Activated CD4-positive, alpha-beta T cell treated with anti-CD3 and anti-CD28 coated beads, Interleukin-2, amount 10 ng/mL, durations not matched to agents 24 days and 14 days (primary cell): ENCODE measurements at regions of chr7 and their contacts with region 1.

Region 1: GRCh38 chr7:105149827-105150226 is 135.8 kb downstream of the KMT2E start:
- DNase-seq: no peak
- H3K4me3 Mint-ChIP-seq: no peak overlapping the region
- H3K27ac Mint-ChIP-seq: no peak overlapping the region
- H3K4me1 Mint-ChIP-seq: peaks cover 6% of the 10 kb centered on the region
- H3K27me3 Mint-ChIP-seq: no peaks in the 10 kb centered on the region

Region 2: GRCh38 chr7:105336009-105336408 is 186.2 kb after region 1 on chr7:
- intact Hi-C with region 1: loop called (anchors 5 kb)
- DNase-seq: no peak
- H3K4me3 Mint-ChIP-seq: no peak overlapping the region
- H3K27ac Mint-ChIP-seq: no peak overlapping the region
- H3K4me1 Mint-ChIP-seq: peaks cover 5% of the 10 kb centered on the region
- H3K27me3 Mint-ChIP-seq: no peaks in the 10 kb centered on the region

Region 3: GRCh38 chr7:105429746-105430612 is 280.2 kb after region 1 on chr7:
- intact Hi-C with region 1: loop called (anchors 10 kb)
- DNase-seq: peak; percentile 83
- H3K4me3 Mint-ChIP-seq: no peak overlapping the region
- H3K27ac Mint-ChIP-seq: no peak overlapping the region
- H3K4me1 Mint-ChIP-seq: peaks cover 6% of the 10 kb centered on the region
- H3K27me3 Mint-ChIP-seq: no peaks in the 10 kb centered on the region